ENCODE measurements at regions of chr10 and their contacts with region 1.

Region 1: DNA sequence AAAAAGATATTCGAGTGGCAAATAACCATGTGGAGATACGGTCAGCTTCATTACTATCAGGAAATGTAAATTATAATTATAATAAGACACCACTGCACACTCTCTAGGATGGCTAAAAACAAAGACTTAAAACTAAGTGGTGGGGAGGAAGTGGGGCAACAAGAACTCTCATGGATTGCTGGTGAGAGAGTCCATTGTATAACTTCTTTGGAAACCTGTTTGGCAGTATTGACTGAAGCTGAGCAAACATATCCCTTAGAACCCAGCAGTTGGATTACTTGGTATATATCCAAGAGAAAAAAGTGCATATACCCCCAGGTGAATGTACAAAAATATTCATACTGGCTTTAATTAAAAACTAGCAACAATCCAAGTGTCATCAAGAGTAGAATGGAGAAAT is 133.7 kb upstream of the CTBP2 start:
- DNase-seq: no peak
- ATAC-seq: no peak

Region 2: GRCh38 chr10:126846959-126847358 is 1552.8 kb after region 1 on chr10:
- intact Hi-C with region 1: no loop called
- DNase-seq: no peak
- ATAC-seq: no peak

Region 3: GRCh38 chr10:127262606-127263005 is 1968.5 kb after region 1 on chr10:
- intact Hi-C with region 1: loop called (anchors 5 kb)
- DNase-seq: no peak
- ATAC-seq: no peak

Measured in sciatic nerve (tissue), 2 donors.